Activated naive CD4-positive, alpha-beta T cell treated with anti-CD3 and anti-CD28 coated beads for 36 hours (primary cell): ENCODE measurements at regions of chr10 and their contacts with region 1.

Region 1: DNA sequence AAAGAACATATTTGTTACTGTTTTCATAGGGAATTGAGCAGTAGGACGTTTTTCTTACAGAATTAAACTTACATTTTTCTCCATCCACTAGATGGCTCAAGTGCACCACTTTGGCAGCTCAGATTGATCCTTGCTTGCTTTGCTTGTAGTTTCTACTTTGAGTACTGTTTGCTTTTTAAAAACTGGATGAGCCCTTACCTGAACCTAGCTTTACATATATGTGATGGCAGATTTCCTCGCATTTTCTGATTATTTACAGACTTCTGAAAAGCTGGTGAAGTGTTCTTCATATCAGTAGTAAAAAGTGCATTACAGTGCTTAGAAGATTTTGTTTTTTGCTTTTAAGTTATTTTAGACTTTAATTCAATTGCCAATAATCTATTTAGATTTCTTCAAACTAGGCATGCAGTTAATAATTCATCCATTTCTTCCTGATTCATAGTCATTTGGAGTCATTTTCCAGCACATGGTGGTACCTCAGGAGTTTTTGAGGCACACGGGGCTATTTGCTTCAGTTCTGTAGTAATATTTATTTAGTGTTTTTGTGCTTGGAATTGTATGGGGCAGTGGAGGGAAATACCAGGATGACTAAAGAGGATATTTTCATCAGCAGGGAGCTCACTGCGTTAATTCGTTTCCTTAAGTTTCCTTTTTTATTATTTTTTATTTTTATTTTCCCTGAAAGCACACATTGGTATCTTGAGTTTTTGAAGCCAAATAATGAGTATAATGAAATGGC is 57.3 kb downstream of the MAPK8 start:
- DNase-seq: peak; percentile 58
- H3K4me3 Mint-ChIP-seq: no peak overlapping the region
- H3K27ac Mint-ChIP-seq: no peak overlapping the region
- H3K4me1 Mint-ChIP-seq: peaks cover 12% of the 10 kb centered on the region
- H3K27me3 Mint-ChIP-seq: no peaks in the 10 kb centered on the region

Region 2: DNA sequence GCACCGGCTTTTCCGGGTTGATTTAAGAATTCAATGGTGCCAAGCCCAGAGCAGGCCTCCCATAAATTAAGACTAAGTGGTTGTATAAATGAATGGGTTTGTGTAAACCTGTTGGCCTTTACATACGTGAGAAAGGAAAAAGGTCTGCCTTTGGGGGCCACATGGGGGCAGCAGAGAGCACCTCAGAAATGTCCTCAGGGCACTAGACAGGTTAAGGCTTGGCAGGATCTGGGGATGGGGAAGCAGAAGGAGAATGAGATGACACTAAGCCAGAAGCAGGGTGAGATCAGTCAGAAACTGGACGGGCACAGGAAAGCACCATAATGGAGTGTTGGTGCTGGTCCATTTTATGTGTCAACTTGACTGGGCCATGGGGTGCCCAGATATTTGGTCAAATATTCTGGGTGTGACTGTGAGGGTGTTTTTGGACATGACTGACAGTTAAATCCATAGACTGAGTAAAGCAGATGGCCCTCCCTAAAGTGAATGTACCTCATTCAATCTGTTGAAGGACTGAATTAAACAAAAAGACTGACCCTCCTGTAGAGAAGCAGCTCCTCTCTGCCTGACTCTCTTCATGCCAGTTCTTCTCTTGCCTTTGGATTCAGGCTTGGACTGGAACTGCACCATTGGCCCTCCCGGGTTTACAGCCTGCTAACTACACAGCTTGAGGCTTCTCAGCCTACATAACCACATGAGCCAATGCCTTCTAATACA is 148.1 kb before region 1 on chr10:
- CTCF ChIA-PET with region 1: no interaction called
- intact Hi-C with region 1: loop called (anchors 10 kb)
- DNase-seq: peak; percentile 62
- H3K4me3 Mint-ChIP-seq: no peak overlapping the region
- H3K27ac Mint-ChIP-seq: no peak overlapping the region
- H3K4me1 Mint-ChIP-seq: no peaks in the 10 kb centered on the region
- H3K27me3 Mint-ChIP-seq: peaks cover 7% of the 10 kb centered on the region

Region 3: DNA sequence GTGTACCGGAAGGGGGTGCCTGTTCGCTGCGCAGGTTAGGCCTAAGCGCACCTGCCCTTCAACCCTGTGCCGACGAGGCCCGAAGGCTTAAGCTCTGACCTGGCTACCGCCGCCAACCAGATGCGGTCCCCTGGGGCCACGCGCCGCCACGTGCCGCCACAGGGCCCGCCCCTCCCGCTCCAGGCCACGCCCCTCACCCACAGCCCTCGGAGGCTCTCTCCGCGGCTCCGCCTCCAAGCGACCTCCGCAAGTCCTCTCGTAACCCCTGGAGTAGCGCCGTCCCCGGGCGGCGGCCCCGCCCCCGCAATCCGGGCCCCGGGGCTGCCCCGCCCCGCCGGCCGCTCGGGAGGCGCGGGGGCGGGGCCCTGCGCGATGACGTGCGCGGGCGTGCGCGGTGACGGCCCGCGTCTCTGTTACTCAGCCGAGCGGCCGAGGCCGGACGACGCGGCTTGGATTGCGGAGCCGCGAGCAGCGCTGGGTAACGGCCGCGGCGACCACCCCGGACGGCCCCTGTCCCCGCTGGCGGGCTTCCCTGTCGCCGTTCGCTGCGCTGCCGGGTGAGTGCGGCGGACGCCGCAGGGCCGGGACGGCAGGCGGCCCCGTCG is 57.4 kb before region 1 on chr10 and contains the start of gene MAPK8:
- CTCF ChIA-PET with region 1: no interaction called
- intact Hi-C with region 1: loop called (anchors 2 kb)
- DNase-seq: peak; percentile 90
- H3K4me3 Mint-ChIP-seq: peak within 1 kb of the TSS; percentile 80
- H3K27ac Mint-ChIP-seq: peak within 1 kb of the TSS; percentile 58
- H3K4me1 Mint-ChIP-seq: peaks cover 30% of the 10 kb centered on the region
- H3K27me3 Mint-ChIP-seq: no peaks in the 10 kb centered on the region
- total RNA-seq, gene MAPK8: 29.7 to 36.2 TPM

Region 4: GRCh38 chr10:48390933-48391845 is 27.4 kb after region 1 on chr10:
- CTCF ChIA-PET with region 1: interaction called, 5 read pairs
- intact Hi-C with region 1: loop called (anchors 2 kb)
- DNase-seq: peak; percentile 15
- H3K4me3 Mint-ChIP-seq: no peak overlapping the region
- H3K27ac Mint-ChIP-seq: no peak overlapping the region
- H3K4me1 Mint-ChIP-seq: peaks cover 53% of the 10 kb centered on the region
- H3K27me3 Mint-ChIP-seq: no peaks in the 10 kb centered on the region

Region 5: DNA sequence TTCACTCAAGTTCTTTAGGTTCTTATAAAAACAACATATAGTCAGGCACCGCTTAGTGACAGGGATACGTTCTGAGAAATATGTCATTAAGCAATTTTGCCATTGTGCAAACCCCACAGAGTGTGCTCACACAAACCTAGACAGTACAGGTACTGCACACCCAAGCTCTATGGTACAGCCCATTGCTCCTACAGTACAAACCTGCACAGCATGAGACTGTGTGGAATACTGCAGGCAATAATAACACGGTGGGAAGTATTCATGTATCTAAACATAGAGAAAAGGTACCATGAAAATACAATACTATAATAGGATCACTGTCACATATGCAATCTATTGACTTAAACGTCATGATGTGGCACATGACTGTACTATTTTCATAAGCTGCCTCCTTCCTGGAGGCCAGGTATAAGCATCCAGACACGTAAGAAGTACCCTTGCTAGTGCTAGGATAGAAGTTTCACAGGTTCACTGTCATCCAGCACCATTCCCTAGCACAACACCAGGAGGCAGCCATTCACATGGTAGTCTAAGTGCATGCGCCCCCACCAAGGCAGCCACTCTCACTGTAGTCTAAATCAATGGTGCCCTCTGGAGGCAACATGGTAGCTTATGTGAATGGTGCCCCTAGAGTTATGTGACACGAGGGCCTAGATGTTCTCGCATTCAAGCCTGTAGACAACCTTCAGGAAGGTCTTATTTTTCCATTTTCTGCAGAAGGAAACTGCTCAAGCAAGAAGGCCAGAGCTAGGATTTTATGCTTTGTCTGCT is 142.5 kb after region 1 on chr10:
- CTCF ChIA-PET with region 1: interaction called, 11 read pairs
- intact Hi-C with region 1: loop called (anchors 1 kb)
- DNase-seq: peak; percentile 35
- H3K4me3 Mint-ChIP-seq: no peak overlapping the region
- H3K27ac Mint-ChIP-seq: no peak overlapping the region
- H3K4me1 Mint-ChIP-seq: no peaks in the 10 kb centered on the region
- H3K27me3 Mint-ChIP-seq: peaks cover under 1% of the 10 kb centered on the region

Region 6: DNA sequence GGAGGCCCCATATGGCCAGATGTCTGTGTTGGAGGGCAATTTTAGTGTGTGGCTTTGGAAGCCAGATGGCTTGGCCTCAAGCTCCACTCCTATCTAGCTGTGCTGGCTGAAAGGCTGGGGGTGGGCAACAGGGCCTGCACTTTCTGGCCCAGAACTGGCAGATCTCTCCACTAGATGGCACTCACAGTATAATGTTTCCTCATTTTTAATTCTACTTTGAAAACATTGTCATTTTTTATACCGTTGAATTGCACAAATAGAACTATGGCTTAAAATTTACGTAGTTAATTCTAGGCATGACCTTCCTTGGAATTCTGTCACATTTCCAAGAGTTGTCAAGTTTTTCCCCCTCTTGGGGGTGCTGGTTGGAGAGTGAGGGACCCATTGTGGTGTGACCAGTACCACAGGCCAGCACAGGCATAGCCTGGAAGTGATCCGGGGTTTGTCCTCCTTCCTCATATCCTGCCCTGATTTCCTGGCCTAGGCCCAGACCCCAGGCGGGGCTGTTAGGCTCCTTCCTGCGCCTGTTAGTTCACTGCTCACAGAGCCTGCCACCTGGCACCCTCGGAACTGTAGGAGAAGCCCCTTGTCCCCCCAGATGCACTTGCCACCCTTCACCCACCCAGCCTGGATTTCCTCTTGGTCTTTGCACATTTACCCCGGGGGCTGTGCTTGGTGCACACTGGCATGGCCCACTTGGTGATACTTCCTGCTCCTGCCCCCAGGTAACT is 188.2 kb after region 1 on chr10:
- CTCF ChIA-PET with region 1: no interaction called
- intact Hi-C with region 1: loop called (anchors 1 kb)
- DNase-seq: peak; percentile 36
- H3K4me3 Mint-ChIP-seq: no peak overlapping the region
- H3K27ac Mint-ChIP-seq: no peak overlapping the region
- H3K4me1 Mint-ChIP-seq: no peaks in the 10 kb centered on the region
- H3K27me3 Mint-ChIP-seq: peaks cover under 1% of the 10 kb centered on the region

Region 7: DNA sequence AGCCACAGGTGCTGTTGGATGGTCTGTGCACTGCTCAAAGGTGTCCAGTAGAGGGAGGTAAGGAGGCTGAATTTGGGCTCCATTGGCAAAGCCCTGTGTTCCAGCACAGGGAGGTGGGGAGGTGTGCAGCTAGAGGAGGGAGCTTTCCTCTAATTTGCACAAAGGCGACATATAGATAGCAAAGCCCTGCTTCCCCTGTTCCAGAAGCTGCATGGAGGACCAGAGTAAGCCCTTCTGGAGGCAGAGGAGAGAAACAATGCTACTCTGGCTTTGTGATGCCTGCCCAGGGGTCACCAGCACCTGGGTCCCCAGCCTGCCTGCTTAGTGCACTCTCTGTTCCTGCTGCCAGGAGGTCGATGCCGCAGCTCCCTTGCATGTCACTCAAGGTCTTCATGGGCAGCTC is 244.5 kb after region 1 on chr10:
- CTCF ChIA-PET with region 1: interaction called, 6 read pairs
- intact Hi-C with region 1: loop called (anchors 1 kb)
- DNase-seq: peak; percentile 45
- H3K4me3 Mint-ChIP-seq: no peak overlapping the region
- H3K27ac Mint-ChIP-seq: no peak overlapping the region
- H3K4me1 Mint-ChIP-seq: peaks cover 3% of the 10 kb centered on the region
- H3K27me3 Mint-ChIP-seq: peaks cover 43% of the 10 kb centered on the region